AG04450 (cell line): ENCODE measurements at regions of chr17 and their contacts with region 1.

Region 1: GRCh38 chr17:49193432-49194211 is 16.8 kb downstream of the GNGT2 start:
- DNase-seq: no peak
- H3K4me3 ChIP-seq: peak overlapping the region; percentile 89
- H3K27ac ChIP-seq: peak overlapping the region; percentile 98
- H3K27me3 ChIP-seq: no peaks in the 10 kb centered on the region
- CTCF ChIP-seq: no peak

Region 2: GRCh38 chr17:47776330-47777197 is 1417.1 kb before region 1 on chr17:
- CTCF ChIA-PET with region 1: no interaction called
- POLR2A ChIA-PET with region 1: interaction called, 11 read pairs
- DNase-seq: no peak
- H3K4me3 ChIP-seq: no peak overlapping the region
- H3K27ac ChIP-seq: no peak overlapping the region
- H3K27me3 ChIP-seq: peaks cover 46% of the 10 kb centered on the region
- CTCF ChIP-seq: peak; percentile 74

Region 3: DNA sequence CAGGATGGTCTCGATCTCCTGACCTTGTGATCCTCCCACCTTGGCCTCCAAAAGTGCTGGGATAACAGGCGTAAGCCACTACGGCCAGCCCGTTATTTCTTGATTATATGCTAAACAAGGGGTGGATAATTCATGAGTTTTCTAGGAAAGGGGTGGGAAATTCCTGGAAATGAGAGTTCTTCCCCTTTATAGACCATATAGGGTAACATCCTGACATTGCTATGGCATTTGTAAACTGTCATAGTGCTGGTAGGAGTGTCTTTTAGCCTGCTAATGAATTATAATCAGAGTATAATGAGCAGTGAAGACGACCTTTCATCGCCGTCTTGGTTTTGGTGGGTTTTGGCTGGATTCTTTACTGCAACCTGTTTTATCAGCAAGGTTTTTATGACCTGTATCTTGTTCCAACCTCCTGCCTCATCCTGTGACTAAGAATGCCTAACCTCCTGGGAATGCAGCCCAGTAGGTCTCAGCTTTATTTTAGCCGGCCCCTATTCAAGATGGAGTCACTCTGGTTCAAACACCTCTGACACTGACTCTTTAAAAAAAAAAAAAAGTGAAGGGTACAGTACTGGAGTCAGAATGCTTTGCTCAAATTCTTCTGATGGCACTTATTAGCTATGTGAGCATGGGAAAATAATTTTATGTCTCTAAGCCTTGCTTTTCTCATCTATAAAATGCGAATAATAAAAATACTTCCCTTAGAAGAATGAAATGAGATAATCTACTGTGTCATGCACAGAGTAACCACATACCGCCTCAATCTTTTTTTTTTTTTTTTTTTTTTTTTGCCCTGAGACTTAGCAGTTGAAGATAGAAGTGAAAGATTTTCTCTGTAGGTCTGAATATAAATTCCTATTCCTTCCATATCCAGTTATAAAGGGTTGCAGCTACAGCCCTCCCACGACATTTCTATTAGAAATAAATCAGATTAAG is 367.9 kb before region 1 on chr17:
- CTCF ChIA-PET with region 1: no interaction called
- POLR2A ChIA-PET with region 1: no interaction called
- DNase-seq: no peak
- H3K4me3 ChIP-seq: no peak overlapping the region
- H3K27ac ChIP-seq: no peak overlapping the region
- H3K27me3 ChIP-seq: no peaks in the 10 kb centered on the region
- CTCF ChIP-seq: no peak

Region 4: DNA sequence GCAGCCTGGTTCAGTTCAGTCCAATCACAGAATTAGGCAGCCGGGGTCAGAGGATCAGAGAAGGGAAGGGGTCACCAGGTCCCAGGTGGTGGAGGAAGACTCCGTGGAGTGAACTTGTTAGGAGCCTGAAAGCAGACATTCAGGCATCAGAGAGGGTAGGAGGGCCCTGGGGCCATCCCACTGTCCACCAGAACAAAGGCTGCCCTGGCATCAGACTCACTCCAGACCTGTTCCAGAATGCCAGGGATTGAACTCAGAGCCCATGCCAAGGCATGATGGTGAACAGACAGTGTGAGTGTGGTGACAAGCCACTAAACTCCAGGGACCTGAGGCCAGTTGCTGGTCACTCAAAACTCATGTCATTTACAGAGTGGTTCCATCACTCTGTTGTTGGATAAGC is 23.4 kb before region 1 on chr17:
- CTCF ChIA-PET with region 1: no interaction called
- POLR2A ChIA-PET with region 1: no interaction called
- DNase-seq: no peak
- H3K4me3 ChIP-seq: no peak overlapping the region
- H3K27ac ChIP-seq: no peak overlapping the region
- H3K27me3 ChIP-seq: peaks cover 38% of the 10 kb centered on the region
- CTCF ChIP-seq: no peak